Colonic mucosa (tissue), 4 donors: ENCODE measurements at regions of chr13 and their contacts with region 1.

Region 1: GRCh38 chr13:59906413-59907049 is 257.2 kb downstream of the DIAPH3 start:
- DNase-seq: no peak
- H3K4me3 ChIP-seq: no peak overlapping the region
- H3K27ac ChIP-seq: no peak overlapping the region
- H3K4me1 ChIP-seq: no peaks in the 10 kb centered on the region
- H3K27me3 ChIP-seq: no peaks in the 10 kb centered on the region
- CTCF ChIP-seq: peak; percentile 40

Region 2: GRCh38 chr13:59391696-59392095 is 514.8 kb before region 1 on chr13:
- intact Hi-C with region 1: loop called (anchors 5 kb)
- DNase-seq: peak; percentile 67
- H3K4me3 ChIP-seq: no peak overlapping the region
- H3K27ac ChIP-seq: no peak overlapping the region
- H3K4me1 ChIP-seq: no peaks in the 10 kb centered on the region
- H3K27me3 ChIP-seq: no peaks in the 10 kb centered on the region
- CTCF ChIP-seq: peak; percentile 72